CD4-positive, alpha-beta T cell (primary cell): ENCODE measurements at regions of chr3 and their contacts with region 1.

Region 1: DNA sequence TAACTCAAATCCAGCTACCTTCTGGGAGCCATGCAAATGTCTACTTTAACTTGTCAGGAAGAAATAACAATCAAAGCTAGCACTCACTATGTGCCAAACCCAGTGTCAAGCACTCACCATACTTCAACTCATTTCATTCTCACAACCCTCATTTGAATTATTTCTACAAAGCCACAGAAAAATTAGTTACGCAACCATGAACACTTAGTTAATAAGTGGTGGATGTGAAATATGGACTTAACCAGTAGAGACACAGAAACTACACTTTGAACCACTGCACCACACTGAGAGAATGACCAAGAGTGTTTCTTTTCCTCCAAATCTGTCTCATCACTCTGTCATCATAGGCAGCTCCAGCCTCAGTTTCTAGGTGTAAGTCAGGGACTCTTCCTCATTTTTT is 91.0 kb upstream of the MBNL1 start:
- DNase-seq: no peak
- ATAC-seq: no peak
- H3K4me3 ChIP-seq: no peak overlapping the region
- H3K4me3 Mint-ChIP-seq: no peak overlapping the region
- H3K27ac ChIP-seq: no peak overlapping the region
- H3K27ac Mint-ChIP-seq: no peak overlapping the region
- H3K4me1 ChIP-seq: no peaks in the 10 kb centered on the region
- H3K4me1 Mint-ChIP-seq: peaks cover 36% of the 10 kb centered on the region
- H3K27me3 ChIP-seq: no peaks in the 10 kb centered on the region
- H3K27me3 Mint-ChIP-seq: no peaks in the 10 kb centered on the region
- CTCF ChIP-seq: no peak

Region 2: GRCh38 chr3:151871639-151872468 is 305.9 kb before region 1 on chr3:
- CTCF ChIA-PET with region 1: no interaction called
- POLR2A ChIA-PET with region 1: no interaction called
- intact Hi-C with region 1: no loop called
- DNase-seq: peak in 3 of 14 experiments; percentile 36 to 70 (median 58)
- ATAC-seq: no peak
- H3K4me3 ChIP-seq: no peak overlapping the region
- H3K4me3 Mint-ChIP-seq: no peak overlapping the region
- H3K27ac ChIP-seq: no peak overlapping the region
- H3K27ac Mint-ChIP-seq: no peak overlapping the region
- H3K4me1 ChIP-seq: no peaks in the 10 kb centered on the region
- H3K4me1 Mint-ChIP-seq: peaks cover 12% of the 10 kb centered on the region
- H3K27me3 ChIP-seq: no peaks in the 10 kb centered on the region
- H3K27me3 Mint-ChIP-seq: peaks cover 4% of the 10 kb centered on the region
- CTCF ChIP-seq: no peak

Region 3: DNA sequence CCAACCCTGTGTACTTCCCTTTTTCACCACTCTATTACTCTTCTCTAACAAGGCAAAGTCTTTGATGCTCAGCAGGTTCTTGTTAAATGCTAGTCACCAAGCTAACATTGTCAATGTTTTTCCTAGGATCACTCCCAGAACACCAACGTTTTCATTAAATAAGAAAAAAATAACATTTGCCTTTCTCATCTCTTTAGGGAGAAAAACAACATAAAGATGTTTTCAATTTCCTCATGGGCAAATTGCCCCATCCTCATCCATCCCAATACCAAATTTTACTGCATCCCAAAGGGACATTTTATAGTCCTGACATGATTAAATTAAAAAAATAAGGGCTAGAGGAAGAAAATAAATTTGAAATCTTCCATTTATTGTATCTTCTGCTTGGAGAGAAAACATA is 197.9 kb before region 1 on chr3:
- CTCF ChIA-PET with region 1: no interaction called
- POLR2A ChIA-PET with region 1: no interaction called
- intact Hi-C with region 1: no loop called
- DNase-seq: no peak
- ATAC-seq: no peak
- H3K4me3 ChIP-seq: no peak overlapping the region
- H3K4me3 Mint-ChIP-seq: no peak overlapping the region
- H3K27ac ChIP-seq: no peak overlapping the region
- H3K27ac Mint-ChIP-seq: no peak overlapping the region
- H3K4me1 ChIP-seq: no peaks in the 10 kb centered on the region
- H3K4me1 Mint-ChIP-seq: no peaks in the 10 kb centered on the region
- H3K27me3 ChIP-seq: no peaks in the 10 kb centered on the region
- H3K27me3 Mint-ChIP-seq: no peaks in the 10 kb centered on the region
- CTCF ChIP-seq: no peak

Region 4: DNA sequence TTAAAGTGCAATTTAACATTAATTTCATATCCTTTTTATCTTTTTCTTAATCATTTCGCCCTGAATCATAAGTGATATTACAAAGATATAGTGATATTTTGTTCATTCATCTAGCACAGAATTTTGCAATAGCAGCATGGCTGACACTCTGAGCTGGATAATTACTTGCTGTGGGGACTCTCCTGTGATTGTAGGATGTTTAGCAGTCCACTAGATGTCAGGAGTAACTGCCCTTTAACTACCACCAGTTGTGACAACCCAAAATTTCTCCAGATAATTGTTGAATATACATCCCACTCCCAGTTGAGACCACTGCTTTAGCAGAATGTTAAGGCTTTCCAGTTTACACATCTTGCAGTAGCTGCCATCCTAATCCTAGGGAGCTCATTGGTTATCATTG is 105.8 kb before region 1 on chr3:
- CTCF ChIA-PET with region 1: no interaction called
- POLR2A ChIA-PET with region 1: no interaction called
- intact Hi-C with region 1: loop called in 1 of 2 experiments (anchors 5 kb)
- DNase-seq: peak in 4 of 14 experiments; percentile 2 to 65 (median 56)
- ATAC-seq: peak; percentile 86
- H3K4me3 ChIP-seq: no peak overlapping the region
- H3K4me3 Mint-ChIP-seq: no peak overlapping the region
- H3K27ac ChIP-seq: no peak overlapping the region
- H3K27ac Mint-ChIP-seq: no peak overlapping the region
- H3K4me1 ChIP-seq: no peaks in the 10 kb centered on the region
- H3K4me1 Mint-ChIP-seq: peaks cover 5% of the 10 kb centered on the region
- H3K27me3 ChIP-seq: no peaks in the 10 kb centered on the region
- H3K27me3 Mint-ChIP-seq: no peaks in the 10 kb centered on the region
- CTCF ChIP-seq: peak; percentile 45